ENCODE measurements at regions of chr1 and their contacts with region 1.

Region 1: DNA sequence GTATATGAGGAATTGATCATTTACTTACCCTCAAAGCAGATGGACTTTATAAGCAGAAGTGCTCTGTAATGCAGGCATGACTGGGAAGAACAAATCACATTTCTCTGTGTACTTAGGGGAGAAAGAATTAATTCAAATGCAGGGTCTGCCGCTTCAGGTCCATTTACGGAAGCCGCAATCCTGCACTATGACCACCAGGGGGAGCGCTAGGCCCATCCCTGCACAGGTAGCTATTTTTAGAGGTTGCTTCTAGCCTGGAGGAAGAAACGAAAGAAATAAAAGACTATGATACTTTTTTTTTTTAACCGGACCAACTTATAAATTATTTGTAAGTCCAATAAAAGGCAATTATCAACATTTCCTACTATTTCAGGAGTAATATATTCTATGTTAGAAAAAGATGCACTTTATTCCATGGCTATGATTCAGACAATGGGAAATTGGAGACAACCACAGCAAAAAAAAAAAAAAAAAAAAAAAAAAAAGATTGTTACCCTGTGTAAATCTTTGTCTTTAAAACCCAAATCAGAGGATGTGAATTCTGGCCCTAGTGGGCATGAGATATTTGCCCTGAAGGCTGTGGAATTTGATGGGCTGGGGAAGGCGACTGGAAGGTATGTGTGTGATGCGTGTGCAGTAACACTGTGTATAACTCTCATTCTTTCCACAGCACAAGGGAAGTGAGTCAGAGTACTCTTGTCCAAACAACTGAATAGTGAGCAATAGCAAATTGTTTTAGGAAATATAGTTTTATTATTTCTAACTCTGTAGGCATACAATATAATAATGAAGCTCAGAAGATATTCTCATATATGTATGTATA is 12.9 kb upstream of the FYB2 start:
- DNase-seq: peak; percentile 82
- H3K4me3 Mint-ChIP-seq: peak overlapping the region; percentile 50
- H3K27ac Mint-ChIP-seq: no peak overlapping the region
- H3K4me1 Mint-ChIP-seq: peaks cover 16% of the 10 kb centered on the region
- H3K27me3 Mint-ChIP-seq: peaks cover 20% of the 10 kb centered on the region
- CTCF ChIP-seq: peak; percentile 93

Region 2: DNA sequence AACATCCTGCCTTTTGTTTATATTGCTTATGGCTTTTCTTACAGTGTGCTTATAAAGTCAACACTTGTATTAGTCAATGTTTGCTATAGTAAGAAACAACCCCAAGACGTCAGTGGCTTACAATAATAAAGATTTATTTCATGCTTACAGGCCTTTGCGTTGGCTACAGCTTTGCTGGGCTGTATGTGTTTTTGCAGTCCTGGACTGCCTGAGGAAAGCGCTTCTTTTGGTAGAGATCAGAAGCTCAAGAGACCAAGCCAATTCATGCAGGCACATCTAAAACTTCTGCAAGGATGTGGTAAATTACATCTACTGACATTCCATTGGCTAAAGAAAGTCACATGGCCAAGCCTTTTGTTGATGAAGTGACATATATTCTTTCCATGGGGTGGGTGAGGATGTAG is 204.4 kb before region 1 on chr1:
- CTCF ChIA-PET with region 1: no interaction called
- POLR2A ChIA-PET with region 1: no interaction called
- intact Hi-C with region 1: no loop called
- DNase-seq: peak; percentile 32
- H3K4me3 Mint-ChIP-seq: no peak overlapping the region
- H3K27ac Mint-ChIP-seq: no peak overlapping the region
- H3K4me1 Mint-ChIP-seq: no peaks in the 10 kb centered on the region
- H3K27me3 Mint-ChIP-seq: no peaks in the 10 kb centered on the region
- CTCF ChIP-seq: no peak

Region 3: GRCh38 chr1:57340334-57341070 is 508.4 kb after region 1 on chr1:
- CTCF ChIA-PET with region 1: interaction called, 18 read pairs
- POLR2A ChIA-PET with region 1: no interaction called
- intact Hi-C with region 1: loop called (anchors 2 kb)
- DNase-seq: no peak
- H3K4me3 Mint-ChIP-seq: no peak overlapping the region
- H3K27ac Mint-ChIP-seq: no peak overlapping the region
- H3K4me1 Mint-ChIP-seq: no peaks in the 10 kb centered on the region
- H3K27me3 Mint-ChIP-seq: peaks cover 22% of the 10 kb centered on the region
- CTCF ChIP-seq: no peak

Region 4: DNA sequence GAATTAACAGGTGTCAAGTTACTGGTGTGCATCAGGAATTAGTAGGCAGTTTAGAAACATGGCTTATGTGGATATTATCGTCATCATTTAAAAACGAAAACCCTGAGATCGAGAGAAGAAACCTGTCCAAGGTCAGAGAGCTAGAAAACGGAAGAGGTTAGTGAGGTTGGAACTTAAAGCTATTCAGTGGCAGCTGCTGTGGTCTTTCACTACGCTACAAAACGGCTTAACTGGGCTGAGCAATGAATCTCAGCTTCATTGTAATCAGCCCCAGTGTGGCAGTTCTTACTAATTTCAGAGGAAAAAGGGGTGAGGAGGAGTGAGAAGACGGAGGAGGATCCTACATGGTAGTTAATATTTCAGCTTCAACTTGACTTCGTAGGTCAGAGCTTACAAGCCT is 513.8 kb after region 1 on chr1:
- CTCF ChIA-PET with region 1: interaction called, 18 read pairs
- POLR2A ChIA-PET with region 1: no interaction called
- intact Hi-C with region 1: loop called (anchors 2 kb)
- DNase-seq: no peak
- H3K4me3 Mint-ChIP-seq: no peak overlapping the region
- H3K27ac Mint-ChIP-seq: no peak overlapping the region
- H3K4me1 Mint-ChIP-seq: no peaks in the 10 kb centered on the region
- H3K27me3 Mint-ChIP-seq: no peaks in the 10 kb centered on the region
- CTCF ChIP-seq: no peak

Region 5: GRCh38 chr1:58047265-58047858 is 1215.3 kb after region 1 on chr1:
- CTCF ChIA-PET with region 1: interaction called, 7 read pairs
- POLR2A ChIA-PET with region 1: no interaction called
- intact Hi-C with region 1: loop called (anchors 1 kb)
- DNase-seq: peak; percentile 35
- H3K4me3 Mint-ChIP-seq: no peak overlapping the region
- H3K27ac Mint-ChIP-seq: no peak overlapping the region
- H3K4me1 Mint-ChIP-seq: no peaks in the 10 kb centered on the region
- H3K27me3 Mint-ChIP-seq: no peaks in the 10 kb centered on the region
- CTCF ChIP-seq: peak; percentile 71

Region 6: GRCh38 chr1:58162952-58163550 is 1331.0 kb after region 1 on chr1:
- CTCF ChIA-PET with region 1: interaction called, 18 read pairs
- POLR2A ChIA-PET with region 1: no interaction called
- intact Hi-C with region 1: loop called (anchors 1 kb)
- DNase-seq: peak; percentile 85
- H3K4me3 Mint-ChIP-seq: no peak overlapping the region
- H3K27ac Mint-ChIP-seq: no peak overlapping the region
- H3K4me1 Mint-ChIP-seq: no peaks in the 10 kb centered on the region
- H3K27me3 Mint-ChIP-seq: no peaks in the 10 kb centered on the region
- CTCF ChIP-seq: peak; percentile 82

Region 7: GRCh38 chr1:58546520-58547308 is 1714.6 kb after region 1 on chr1 and contains the start of gene OMA1:
- CTCF ChIA-PET with region 1: interaction called, 3 read pairs
- POLR2A ChIA-PET with region 1: no interaction called
- intact Hi-C with region 1: loop called (anchors 2 kb)
- DNase-seq: peak; percentile 93
- H3K4me3 Mint-ChIP-seq: peak within 1 kb of the TSS; percentile 92
- H3K27ac Mint-ChIP-seq: peak within 1 kb of the TSS; percentile 95
- H3K4me1 Mint-ChIP-seq: peaks cover 20% of the 10 kb centered on the region
- H3K27me3 Mint-ChIP-seq: no peaks in the 10 kb centered on the region
- CTCF ChIP-seq: peak; percentile 84
- total RNA-seq, gene OMA1: 15.7 and 17.9 TPM in 2 replicates